A673 (cell line): ENCODE measurements at regions of chr7 and their contacts with region 1.

Region 1: GRCh38 chr7:148987010-148987750 is 41.1 kb downstream of the PDIA4 start:
- DNase-seq: peak; percentile 90
- H3K4me3 ChIP-seq: peak overlapping the region; percentile 70
- H3K27ac ChIP-seq: peak overlapping the region; percentile 90
- H3K4me1 ChIP-seq: peaks cover 6% of the 10 kb centered on the region
- H3K27me3 ChIP-seq: no peaks in the 10 kb centered on the region
- CTCF ChIP-seq: no peak

Region 2: DNA sequence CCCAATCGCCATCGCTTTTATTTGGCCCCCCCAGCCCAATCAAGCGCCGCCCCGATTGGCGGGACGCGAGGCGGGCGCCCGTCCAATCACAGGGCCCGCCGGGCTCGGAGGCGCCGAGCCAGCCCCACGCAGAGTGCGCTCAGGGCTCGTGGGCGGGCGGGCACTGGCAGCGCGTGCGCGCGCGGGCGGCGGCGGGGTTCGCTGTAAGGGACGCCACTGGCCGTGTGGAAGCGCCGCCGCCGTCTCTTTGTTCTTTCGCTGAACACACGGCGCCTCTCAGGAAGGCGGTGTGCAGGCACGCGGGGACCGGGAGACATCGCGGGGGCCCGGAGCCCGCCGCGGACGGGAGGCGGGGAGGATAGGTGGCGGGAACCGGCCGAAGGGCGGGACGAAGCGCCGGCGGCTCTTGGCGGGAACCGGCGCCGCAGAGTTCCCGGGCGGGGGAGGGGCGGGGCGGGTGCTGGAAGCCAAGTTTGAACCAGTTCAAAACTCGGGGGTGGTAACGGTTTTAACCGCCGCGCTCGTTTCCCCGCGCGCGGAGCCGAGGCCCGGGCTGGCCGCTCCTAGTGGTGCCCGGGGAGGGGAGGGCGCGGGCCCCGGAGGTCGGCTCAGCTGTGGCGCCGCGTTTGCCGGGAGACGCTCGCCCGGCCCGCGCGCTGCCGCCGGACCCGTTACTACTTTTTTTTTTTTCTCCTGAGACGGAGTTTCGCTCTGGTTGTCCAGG is 102.7 kb before region 1 on chr7:
- CTCF ChIA-PET with region 1: no interaction called
- POLR2A ChIA-PET with region 1: no interaction called
- intact Hi-C with region 1: loop called (anchors 2 kb)
- DNase-seq: peak; percentile 96
- H3K4me3 ChIP-seq: peak overlapping the region; percentile 97
- H3K27ac ChIP-seq: peak overlapping the region; percentile 98
- H3K4me1 ChIP-seq: peaks cover 15% of the 10 kb centered on the region
- H3K27me3 ChIP-seq: no peaks in the 10 kb centered on the region
- CTCF ChIP-seq: no peak

Region 3: GRCh38 chr7:148940702-148941597 is 46.2 kb before region 1 on chr7:
- CTCF ChIA-PET with region 1: no interaction called
- POLR2A ChIA-PET with region 1: no interaction called
- intact Hi-C with region 1: loop called (anchors 1 kb)
- DNase-seq: peak; percentile 92
- H3K4me3 ChIP-seq: peak overlapping the region; percentile 67
- H3K27ac ChIP-seq: peak overlapping the region; percentile 95
- H3K4me1 ChIP-seq: peaks cover 7% of the 10 kb centered on the region
- H3K27me3 ChIP-seq: no peaks in the 10 kb centered on the region
- CTCF ChIP-seq: no peak

Region 4: DNA sequence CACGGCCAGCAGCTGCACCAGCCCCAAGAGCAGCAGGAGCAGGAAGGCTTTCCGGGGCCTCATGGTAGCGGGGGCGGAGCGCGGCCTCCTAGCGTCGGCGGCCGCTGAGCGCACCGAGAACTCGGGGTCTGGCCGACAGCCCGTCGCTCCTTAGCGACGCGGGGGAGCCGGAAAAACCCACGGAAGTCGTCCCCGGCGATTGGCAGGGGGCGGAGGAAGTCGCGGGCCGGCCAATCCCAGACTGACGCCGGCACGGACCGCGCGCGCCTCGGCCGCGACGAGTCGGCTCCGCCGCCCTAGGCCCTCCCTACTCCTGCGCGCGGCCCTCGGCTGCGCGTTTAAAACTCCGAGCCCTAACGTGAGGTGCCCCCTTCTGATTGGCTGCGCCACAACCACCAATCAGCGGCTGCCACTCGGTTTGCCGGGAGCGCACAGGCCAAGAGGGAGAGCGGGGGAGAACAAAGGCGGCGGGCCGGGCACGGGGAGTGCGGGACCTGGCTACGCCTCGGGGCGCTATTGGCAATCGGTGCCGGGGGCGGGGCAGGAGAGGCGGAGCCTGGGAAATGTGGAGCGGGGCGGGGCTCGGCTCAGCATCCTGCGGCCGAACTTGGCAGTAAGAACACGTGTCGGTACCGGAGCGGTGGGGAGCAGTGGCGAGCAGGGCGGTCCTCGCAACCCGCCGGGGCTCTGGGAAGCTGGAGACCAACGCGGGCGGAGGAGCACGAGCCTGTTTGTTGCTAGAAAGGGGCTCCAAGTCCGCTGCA is 41.3 kb after region 1 on chr7 and contains the start of gene PDIA4:
- CTCF ChIA-PET with region 1: no interaction called
- POLR2A ChIA-PET with region 1: no interaction called
- intact Hi-C with region 1: loop called (anchors 5 kb)
- DNase-seq: peak; percentile 100
- H3K4me3 ChIP-seq: peak within 1 kb of the TSS; percentile 99
- H3K27ac ChIP-seq: peak within 1 kb of the TSS; percentile 98
- H3K4me1 ChIP-seq: peaks cover 27% of the 10 kb centered on the region
- H3K27me3 ChIP-seq: no peaks in the 10 kb centered on the region
- CTCF ChIP-seq: no peak
- total RNA-seq, gene PDIA4: 235 and 254 TPM in 2 replicates

Region 5: DNA sequence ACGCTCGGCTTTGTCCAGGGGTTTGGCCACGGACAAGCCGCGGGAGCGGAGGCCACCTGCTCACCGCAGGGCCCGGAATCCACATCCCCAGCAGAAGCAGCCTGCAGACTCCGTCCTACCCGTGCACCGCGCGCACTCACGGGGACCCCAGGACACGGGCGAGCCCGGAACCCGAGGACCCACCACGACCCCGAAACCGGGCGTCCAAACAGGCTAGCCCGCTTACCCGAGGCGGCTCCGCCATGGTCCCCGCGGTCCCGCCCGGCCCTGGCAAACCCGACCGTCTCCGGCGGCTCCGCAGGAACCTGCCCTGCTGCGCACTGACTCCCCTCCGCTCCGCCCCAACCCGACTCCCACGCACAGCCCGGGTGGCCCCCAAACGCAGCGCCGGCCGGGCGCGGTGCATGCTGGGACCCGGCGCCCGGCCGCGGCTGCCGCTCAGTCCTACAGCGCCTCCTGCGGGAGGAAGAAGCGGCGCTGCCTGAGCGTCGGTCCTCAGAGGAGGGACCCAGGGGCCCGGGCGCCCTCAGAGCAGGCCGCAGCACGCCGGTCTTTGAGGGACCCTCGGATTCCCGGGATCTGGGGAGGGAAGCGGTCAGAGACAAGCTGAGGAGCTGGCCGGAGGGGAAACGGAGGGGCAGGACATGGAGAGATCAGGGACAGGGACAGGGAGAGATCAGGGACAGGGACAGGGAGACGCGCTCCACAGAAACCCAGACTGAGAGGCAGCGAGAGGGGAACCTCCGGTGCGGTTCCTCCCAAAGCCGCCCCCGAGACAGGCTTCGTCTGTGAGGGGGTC is 103.4 kb after region 1 on chr7 and contains the start of gene ZNF786:
- CTCF ChIA-PET with region 1: no interaction called
- POLR2A ChIA-PET with region 1: no interaction called
- intact Hi-C with region 1: loop called (anchors 5 kb)
- DNase-seq: peak; percentile 97
- H3K4me3 ChIP-seq: peak within 1 kb of the TSS; percentile 67
- H3K27ac ChIP-seq: peak within 1 kb of the TSS; percentile 85
- H3K4me1 ChIP-seq: no peaks in the 10 kb centered on the region
- H3K27me3 ChIP-seq: no peaks in the 10 kb centered on the region
- CTCF ChIP-seq: peak; percentile 84
- total RNA-seq, gene ZNF786: 9.8 and 9.9 TPM in 2 replicates